Activated T-helper 1 cell treated with anti-CD3 and anti-CD28 coated beads, Interleukin-12 subunit alpha, Interleukin-12 subunit beta, Interleukin-2, Interleukin-4 antibody, amounts not matched to agents 30 ng/mL and 10 ng/mL and 1 ng/mL, durations not matched to agents 14 hours and 24 hours and 36 hours (primary cell): ENCODE measurements at regions of chr1 and their contacts with region 1.

Region 1: GRCh38 chr1:182301467-182302198 is 90.0 kb downstream of the GLUL start:
- DNase-seq: peak; percentile 9
- H3K4me3 Mint-ChIP-seq: peak overlapping the region; percentile 37
- H3K27ac Mint-ChIP-seq: peak overlapping the region; percentile 88
- H3K4me1 Mint-ChIP-seq: peaks cover 51% of the 10 kb centered on the region
- H3K27me3 Mint-ChIP-seq: no peaks in the 10 kb centered on the region

Region 2: DNA sequence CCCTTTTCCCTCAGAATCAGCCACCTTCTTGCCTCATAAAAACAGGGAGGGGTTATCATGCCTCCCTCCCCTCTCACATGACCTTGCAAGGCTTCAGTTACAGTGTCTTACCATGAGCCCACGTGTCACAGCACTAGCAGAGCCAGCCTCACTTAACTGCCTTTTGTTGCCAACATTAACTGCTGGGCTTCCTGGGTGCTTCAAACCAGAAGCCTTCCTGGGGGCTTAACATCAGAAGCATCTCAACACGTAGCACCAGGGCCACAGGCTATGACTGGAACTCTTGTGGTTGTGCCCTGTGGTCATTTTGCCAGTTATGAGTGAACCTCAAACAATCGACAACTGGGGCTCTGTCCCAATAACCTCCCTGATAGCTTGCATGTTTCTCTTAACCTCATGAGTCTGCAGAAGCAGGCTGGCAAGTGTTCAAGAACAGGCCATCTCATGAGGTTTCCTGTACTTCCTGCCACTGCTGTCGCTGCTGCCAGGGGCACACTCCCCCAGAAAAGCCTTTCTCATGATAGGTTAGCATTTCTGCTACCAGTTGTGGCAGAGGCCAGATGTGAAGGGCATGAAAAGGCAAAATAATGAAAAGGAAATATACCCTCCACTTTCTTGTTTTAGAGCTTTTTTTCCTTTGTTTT is 42.3 kb before region 1 on chr1:
- intact Hi-C with region 1: loop called (anchors 1 kb)
- DNase-seq: peak; percentile 55
- H3K4me3 Mint-ChIP-seq: no peak overlapping the region
- H3K27ac Mint-ChIP-seq: peak overlapping the region; percentile 89
- H3K4me1 Mint-ChIP-seq: peaks cover 24% of the 10 kb centered on the region
- H3K27me3 Mint-ChIP-seq: no peaks in the 10 kb centered on the region

Region 3: GRCh38 chr1:182397771-182398393 is 96.2 kb after region 1 on chr1:
- intact Hi-C with region 1: loop called (anchors 1 kb)
- DNase-seq: no peak
- H3K4me3 Mint-ChIP-seq: no peak overlapping the region
- H3K27ac Mint-ChIP-seq: no peak overlapping the region
- H3K4me1 Mint-ChIP-seq: peaks cover 13% of the 10 kb centered on the region
- H3K27me3 Mint-ChIP-seq: peaks cover 13% of the 10 kb centered on the region